ENCODE measurements at regions of chr19 and their contacts with region 1.

Region 1: GRCh38 chr19:21141787-21142464 is at the start of gene ZNF431:
- DNase-seq: peak; percentile 97
- H3K4me3 ChIP-seq: peak within 1 kb of the TSS; percentile 73 to 90 (median 78)
- H3K27ac ChIP-seq: peak within 1 kb of the TSS; percentile 71 to 89 (median 81)
- H3K4me1 ChIP-seq: peaks cover 8 to 12% (median 11%) of the 10 kb centered on the region in 4 donors
- H3K27me3 ChIP-seq: no peaks in the 10 kb centered on the region
- CTCF ChIP-seq: no peak
- EP300 ChIP-seq: no peak
- POLR2A ChIP-seq: no peak
- total RNA-seq, gene ZNF431: 4.1 to 9.1 (median 4.8) TPM

Region 2: GRCh38 chr19:21020298-21021227 is 121.4 kb before region 1 on chr19 and contains the start of gene ZNF430:
- intact Hi-C with region 1: loop called (anchors 10 kb)
- DNase-seq: peak; percentile 99
- H3K4me3 ChIP-seq: peak within 1 kb of the TSS; percentile 72 to 84 (median 80)
- H3K27ac ChIP-seq: peak within 1 kb of the TSS; percentile 87 to 92 (median 88)
- H3K4me1 ChIP-seq: peaks cover 8 to 20% (median 15%) of the 10 kb centered on the region in 4 donors
- H3K27me3 ChIP-seq: no peaks in the 10 kb centered on the region
- CTCF ChIP-seq: no peak
- EP300 ChIP-seq: no peak
- POLR2A ChIP-seq: no peak
- total RNA-seq, gene ZNF430: 4.5 to 11.2 (median 6.3) TPM

Region 3: GRCh38 chr19:21269813-21270212 is 127.9 kb after region 1 on chr19:
- intact Hi-C with region 1: no loop called
- DNase-seq: no peak
- H3K4me3 ChIP-seq: no peak overlapping the region
- H3K27ac ChIP-seq: no peak overlapping the region
- H3K4me1 ChIP-seq: no peaks in the 10 kb centered on the region
- H3K27me3 ChIP-seq: no peaks in the 10 kb centered on the region
- CTCF ChIP-seq: no peak
- EP300 ChIP-seq: no peak
- POLR2A ChIP-seq: no peak

Measured in esophagus muscularis mucosa (tissue), 4 donors.